Endothelial cell of umbilical vein (primary cell): ENCODE measurements at regions of chr9 and their contacts with region 1.

Region 1: DNA sequence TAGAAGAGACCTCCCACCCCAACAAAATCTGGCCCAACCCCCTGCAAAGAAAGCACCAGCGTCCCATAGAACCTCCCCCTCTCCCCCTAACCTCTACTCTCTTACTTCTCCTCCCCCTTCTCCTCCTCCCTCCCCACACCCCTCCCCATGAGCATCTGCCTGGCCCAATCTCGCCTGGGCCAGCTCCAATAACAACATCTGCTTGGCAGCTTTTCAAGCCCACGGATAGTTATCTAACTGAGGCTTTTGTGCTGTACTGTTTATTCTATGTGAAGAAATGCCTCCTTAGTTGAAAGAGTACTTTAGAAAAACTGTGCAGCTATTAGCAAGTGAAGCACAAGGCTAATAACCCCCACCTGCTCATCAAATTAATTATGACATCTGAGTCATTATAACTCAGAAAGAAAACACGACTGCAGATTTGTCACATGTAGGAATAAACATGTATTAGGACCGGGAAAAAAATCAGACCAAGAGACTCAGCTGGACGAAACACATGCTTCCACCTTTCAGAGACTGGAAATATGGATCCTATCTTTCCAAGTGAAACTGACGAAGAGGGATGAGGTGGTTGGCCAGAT is 42.8 kb downstream of the NFIB start:
- DNase-seq: peak; percentile 95
- H3K4me3 ChIP-seq: peak overlapping the region in 1 of 3 experiments; percentile 33
- H3K27ac ChIP-seq: peak overlapping the region; percentile 46
- H3K4me1 ChIP-seq: peaks cover 64% of the 10 kb centered on the region
- H3K27me3 ChIP-seq: no peaks in the 10 kb centered on the region
- CTCF ChIP-seq: no peak
- POLR2A ChIP-seq: no peak

Region 2: GRCh38 chr9:13734601-13735000 is 536.6 kb before region 1 on chr9:
- CTCF ChIA-PET with region 1: no interaction called
- POLR2A ChIA-PET with region 1: no interaction called
- dilution Hi-C with region 1: no loop called
- intact Hi-C with region 1: no loop called
- DNase-seq: no peak
- H3K4me3 ChIP-seq: no peak overlapping the region
- H3K27ac ChIP-seq: no peak overlapping the region
- H3K4me1 ChIP-seq: no peaks in the 10 kb centered on the region
- H3K27me3 ChIP-seq: no peaks in the 10 kb centered on the region
- CTCF ChIP-seq: no peak
- POLR2A ChIP-seq: no peak

Region 3: GRCh38 chr9:13956107-13956506 is 315.1 kb before region 1 on chr9:
- CTCF ChIA-PET with region 1: no interaction called
- POLR2A ChIA-PET with region 1: no interaction called
- dilution Hi-C with region 1: no loop called
- intact Hi-C with region 1: no loop called
- DNase-seq: no peak
- H3K4me3 ChIP-seq: no peak overlapping the region
- H3K27ac ChIP-seq: no peak overlapping the region
- H3K4me1 ChIP-seq: no peaks in the 10 kb centered on the region
- H3K27me3 ChIP-seq: no peaks in the 10 kb centered on the region
- CTCF ChIP-seq: no peak
- POLR2A ChIP-seq: no peak

Region 4: DNA sequence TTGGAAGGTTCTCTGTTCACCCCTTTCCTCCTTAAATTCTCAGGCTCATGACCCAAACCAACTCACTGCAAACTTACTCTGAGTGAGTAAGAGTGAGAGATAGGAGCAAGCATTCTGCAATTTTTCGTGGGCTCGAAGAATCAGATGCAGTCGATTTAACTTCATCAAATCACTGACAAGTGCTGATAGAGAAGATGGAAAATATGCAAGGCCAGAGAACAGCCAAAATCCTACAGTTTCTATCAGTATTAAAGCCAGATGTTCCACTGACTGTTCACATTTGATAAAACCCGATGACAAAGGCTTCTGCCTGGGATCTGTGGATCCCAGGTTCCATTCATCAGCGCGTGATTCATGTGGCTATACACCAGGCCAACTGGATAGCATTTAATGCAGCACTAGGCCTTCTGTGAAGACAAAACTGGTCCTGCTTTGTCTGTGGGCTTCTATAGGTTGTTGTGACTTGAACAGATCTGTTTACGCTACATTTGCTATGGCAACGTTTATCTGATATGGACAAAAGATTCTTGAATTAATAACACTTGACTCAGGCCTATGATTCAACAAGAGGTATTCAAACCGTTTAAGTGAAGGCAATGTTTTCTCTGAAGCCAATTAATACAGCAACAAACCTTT is 208.5 kb before region 1 on chr9:
- CTCF ChIA-PET with region 1: no interaction called
- POLR2A ChIA-PET with region 1: no interaction called
- dilution Hi-C with region 1: no loop called
- intact Hi-C with region 1: no loop called
- DNase-seq: peak; percentile 45
- H3K4me3 ChIP-seq: no peak overlapping the region
- H3K27ac ChIP-seq: no peak overlapping the region
- H3K4me1 ChIP-seq: peaks cover 3% of the 10 kb centered on the region
- H3K27me3 ChIP-seq: no peaks in the 10 kb centered on the region
- CTCF ChIP-seq: no peak
- POLR2A ChIP-seq: no peak

Region 5: DNA sequence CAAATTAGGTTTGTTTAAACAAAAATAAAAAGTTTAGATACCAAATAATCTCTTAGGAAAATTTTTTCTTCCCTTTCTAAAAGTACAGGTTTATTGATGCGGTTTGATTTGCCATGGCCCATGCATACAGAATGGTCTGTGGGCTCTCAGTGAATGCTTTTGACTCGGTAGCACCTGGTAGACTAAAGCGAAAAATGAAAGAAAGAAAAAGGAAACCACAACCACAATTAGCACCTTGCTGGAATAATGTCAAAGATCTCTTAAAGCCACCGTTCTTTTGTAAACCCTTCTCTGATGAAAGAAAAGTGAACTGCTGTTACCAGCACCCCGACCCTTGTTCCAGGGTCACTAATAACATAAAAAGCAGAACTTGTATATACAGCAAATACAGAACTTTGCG is 115.1 kb before region 1 on chr9:
- CTCF ChIA-PET with region 1: no interaction called
- POLR2A ChIA-PET with region 1: no interaction called
- dilution Hi-C with region 1: no loop called
- intact Hi-C with region 1: loop called (anchors 1 kb)
- DNase-seq: no peak
- H3K4me3 ChIP-seq: no peak overlapping the region
- H3K27ac ChIP-seq: peak overlapping the region; percentile 77
- H3K4me1 ChIP-seq: peaks cover 62% of the 10 kb centered on the region
- H3K27me3 ChIP-seq: no peaks in the 10 kb centered on the region
- CTCF ChIP-seq: no peak
- POLR2A ChIP-seq: no peak

Region 6: DNA sequence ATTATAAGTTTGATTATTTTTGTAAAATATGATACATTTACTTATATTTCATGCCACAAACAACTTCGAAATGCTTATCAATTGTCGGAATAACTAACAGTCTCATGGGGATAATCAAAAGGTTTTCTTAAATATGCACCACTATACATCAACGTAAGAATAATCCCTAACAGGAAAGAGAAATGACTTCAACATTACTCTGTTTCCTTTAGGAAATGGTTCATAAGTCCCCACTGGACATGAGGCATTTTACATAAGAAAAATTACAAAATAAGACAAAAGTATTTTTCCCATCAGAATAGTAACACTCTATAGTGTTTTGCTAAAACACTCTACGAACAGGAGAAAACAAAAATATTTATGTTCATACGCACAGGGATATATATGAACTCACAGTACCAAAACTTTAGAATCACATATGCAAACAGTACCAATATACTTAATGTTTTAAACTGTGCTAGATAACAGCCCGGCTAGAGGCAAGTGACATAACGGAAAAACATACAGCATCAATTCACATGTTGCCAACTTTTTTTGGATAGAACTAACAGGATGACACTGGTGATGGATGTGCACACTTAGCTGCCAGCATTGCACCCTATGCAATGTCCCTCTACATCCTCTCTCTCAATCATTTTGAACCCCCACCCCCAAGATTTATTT is 77.7 kb before region 1 on chr9:
- CTCF ChIA-PET with region 1: no interaction called
- POLR2A ChIA-PET with region 1: no interaction called
- dilution Hi-C with region 1: no loop called
- intact Hi-C with region 1: loop called (anchors 5 kb)
- DNase-seq: peak; percentile 90
- H3K4me3 ChIP-seq: peak overlapping the region in 2 of 3 experiments; percentile 21 to 55
- H3K27ac ChIP-seq: peak overlapping the region; percentile 97
- H3K4me1 ChIP-seq: peaks cover 64% of the 10 kb centered on the region
- H3K27me3 ChIP-seq: no peaks in the 10 kb centered on the region
- CTCF ChIP-seq: no peak
- POLR2A ChIP-seq: no peak

Region 7: DNA sequence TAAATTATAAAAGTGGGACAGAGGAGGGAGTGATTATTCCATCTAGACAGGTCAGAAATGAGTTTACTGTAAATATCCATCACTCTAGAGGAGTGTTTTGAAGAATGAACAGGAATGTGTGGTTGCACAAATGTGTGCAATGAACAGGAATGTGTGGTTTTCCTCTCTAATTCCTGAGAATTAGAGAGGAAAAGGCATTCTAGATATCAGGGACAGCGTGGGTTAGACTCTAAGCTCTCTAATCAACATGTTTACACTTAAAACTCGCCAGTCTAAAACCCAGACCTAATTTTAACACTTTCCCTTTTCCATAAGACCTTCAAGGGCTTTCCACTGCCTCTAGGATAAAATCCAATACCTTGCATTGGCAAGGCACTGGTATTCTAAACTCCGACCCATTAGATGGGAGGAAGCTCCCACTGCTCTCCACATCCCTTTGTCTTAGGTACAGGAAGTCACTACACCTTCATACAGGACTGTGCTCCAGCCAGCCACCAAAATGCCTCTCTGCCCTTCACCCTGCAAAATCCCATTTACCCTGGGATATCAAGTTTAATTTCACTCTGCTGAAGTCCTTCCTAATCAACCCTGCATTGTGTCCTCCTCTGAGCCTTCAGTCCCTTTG is 25.2 kb before region 1 on chr9:
- CTCF ChIA-PET with region 1: interaction called, 7 read pairs
- POLR2A ChIA-PET with region 1: no interaction called
- dilution Hi-C with region 1: no loop called
- intact Hi-C with region 1: loop called (anchors 1 kb)
- DNase-seq: peak; percentile 43
- H3K4me3 ChIP-seq: no peak overlapping the region
- H3K27ac ChIP-seq: peak overlapping the region; percentile 73
- H3K4me1 ChIP-seq: peaks cover 59% of the 10 kb centered on the region
- H3K27me3 ChIP-seq: no peaks in the 10 kb centered on the region
- CTCF ChIP-seq: no peak
- POLR2A ChIP-seq: peak; percentile 25

Region 8: DNA sequence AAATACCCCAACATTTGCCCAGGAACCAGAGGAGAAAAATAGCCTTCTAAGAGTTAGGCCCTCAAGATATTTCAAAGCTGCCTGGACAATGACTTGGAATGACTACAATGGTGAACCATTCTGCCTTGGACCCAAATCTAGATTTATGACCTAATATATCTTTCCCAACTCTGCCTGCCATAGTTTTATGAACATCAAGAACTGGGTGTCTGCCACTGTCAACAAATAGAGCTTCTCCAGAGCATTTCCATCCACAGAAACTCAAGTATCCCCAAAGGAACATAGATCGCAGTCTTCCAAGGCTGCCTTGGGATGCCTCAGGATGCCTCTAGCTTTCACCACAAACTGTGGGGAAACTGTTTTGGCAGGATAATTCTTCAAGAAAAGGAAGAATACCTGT is 91.0 kb after region 1 on chr9:
- CTCF ChIA-PET with region 1: no interaction called
- POLR2A ChIA-PET with region 1: no interaction called
- dilution Hi-C with region 1: no loop called
- intact Hi-C with region 1: no loop called
- DNase-seq: no peak
- H3K4me3 ChIP-seq: no peak overlapping the region
- H3K27ac ChIP-seq: no peak overlapping the region
- H3K4me1 ChIP-seq: peaks cover 3% of the 10 kb centered on the region
- H3K27me3 ChIP-seq: no peaks in the 10 kb centered on the region
- CTCF ChIP-seq: no peak
- POLR2A ChIP-seq: no peak

Region 9: DNA sequence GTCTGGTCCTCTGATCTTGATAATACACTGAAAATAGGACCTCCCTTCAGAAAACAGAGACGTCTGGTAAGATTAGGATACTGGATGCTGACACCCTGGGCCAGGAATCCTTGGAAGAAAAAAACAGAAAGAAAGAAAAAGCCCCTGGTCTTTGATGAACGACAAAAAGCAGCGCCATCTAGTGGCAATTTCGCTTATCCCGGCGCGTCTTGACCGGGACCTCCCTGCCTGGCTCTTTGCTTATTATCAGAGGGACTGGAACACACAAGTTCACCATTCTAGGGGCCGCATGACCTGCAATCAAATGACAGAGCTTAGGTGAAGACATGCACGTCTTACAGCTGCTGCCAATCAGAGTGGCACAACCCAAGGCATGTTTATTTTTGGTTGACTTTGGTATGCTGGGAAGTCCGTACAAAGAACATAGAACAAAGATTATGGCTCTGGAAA is 157.6 kb after region 1 on chr9:
- CTCF ChIA-PET with region 1: interaction called, 4 read pairs
- POLR2A ChIA-PET with region 1: no interaction called
- dilution Hi-C with region 1: no loop called
- intact Hi-C with region 1: loop called (anchors 5 kb)
- DNase-seq: peak; percentile 68
- H3K4me3 ChIP-seq: no peak overlapping the region
- H3K27ac ChIP-seq: no peak overlapping the region
- H3K4me1 ChIP-seq: peaks cover 15% of the 10 kb centered on the region
- H3K27me3 ChIP-seq: no peaks in the 10 kb centered on the region
- CTCF ChIP-seq: peak; percentile 79 to 84
- POLR2A ChIP-seq: no peak